ENCODE measurements at regions of chr14 and their contacts with region 1.

Region 1: DNA sequence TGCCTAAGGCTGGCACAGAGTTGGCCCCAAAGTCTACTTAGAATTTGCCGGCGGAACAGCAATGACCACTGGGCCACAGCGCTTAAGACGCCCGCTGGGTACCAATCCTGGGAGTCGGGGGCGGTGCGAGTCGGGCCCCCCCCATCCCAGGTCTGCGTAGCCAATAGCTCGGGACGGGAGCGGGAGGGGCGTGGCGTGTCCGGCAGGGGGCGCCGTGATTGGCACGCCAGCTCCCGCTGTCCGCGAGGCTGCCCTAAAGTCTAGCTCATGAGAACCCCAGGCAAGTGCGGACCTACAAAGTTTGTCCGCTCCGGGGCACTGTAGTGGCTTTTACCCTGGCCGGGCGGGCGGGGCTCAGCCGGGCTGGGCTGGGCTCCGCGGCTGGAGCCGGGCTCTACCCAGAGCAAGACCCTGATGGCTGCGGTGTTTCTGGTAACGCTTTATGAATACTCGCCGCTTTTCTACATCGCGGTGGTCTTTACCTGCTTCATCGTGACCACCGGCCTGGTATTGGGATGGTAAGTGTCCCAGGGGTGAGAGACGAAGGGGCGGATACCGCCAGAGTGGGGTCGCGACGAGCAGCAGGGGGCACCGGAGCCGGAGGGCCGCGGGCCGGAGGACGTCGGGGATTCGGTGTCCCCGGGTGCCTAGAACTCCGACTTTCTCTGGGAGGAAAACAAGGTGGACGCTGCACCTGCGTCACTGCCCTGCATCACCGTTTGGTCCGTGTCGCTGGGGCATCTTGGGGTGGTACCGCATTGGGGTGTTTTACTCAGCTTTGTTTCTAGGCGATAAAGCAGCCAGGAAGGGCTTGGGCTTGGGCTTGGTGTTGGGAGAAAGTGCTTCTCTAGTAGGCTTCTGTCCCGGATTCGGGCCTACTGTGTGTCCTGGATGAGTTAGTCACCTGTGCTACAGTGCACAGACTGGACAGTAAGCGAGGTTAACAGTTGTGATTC is at the start of gene CGRRF1:
- DNase-seq: peak; percentile 97
- H3K4me3 ChIP-seq: peak within 1 kb of the TSS; percentile 85
- H3K27ac ChIP-seq: no peak within 1 kb of the TSS
- H3K4me1 ChIP-seq: peaks cover 18% of the 10 kb centered on the region
- CTCF ChIP-seq: peak; percentile 66
- total RNA-seq, gene CGRRF1: 8.4 and 10.0 TPM in 2 replicates

Region 2: GRCh38 chr14:54488646-54489317 is 21.0 kb before region 1 on chr14 and contains the start of gene GMFB:
- CTCF ChIA-PET with region 1: interaction called, 3 read pairs
- POLR2A ChIA-PET with region 1: interaction called, 75 read pairs
- intact Hi-C with region 1: no loop called
- DNase-seq: peak; percentile 93
- H3K4me3 ChIP-seq: peak within 1 kb of the TSS; percentile 87
- H3K27ac ChIP-seq: peak within 1 kb of the TSS; percentile 65
- H3K4me1 ChIP-seq: peaks cover 52% of the 10 kb centered on the region
- CTCF ChIP-seq: peak; percentile 62
- total RNA-seq, gene GMFB: 45.7 and 61.3 TPM in 2 replicates

Region 3: DNA sequence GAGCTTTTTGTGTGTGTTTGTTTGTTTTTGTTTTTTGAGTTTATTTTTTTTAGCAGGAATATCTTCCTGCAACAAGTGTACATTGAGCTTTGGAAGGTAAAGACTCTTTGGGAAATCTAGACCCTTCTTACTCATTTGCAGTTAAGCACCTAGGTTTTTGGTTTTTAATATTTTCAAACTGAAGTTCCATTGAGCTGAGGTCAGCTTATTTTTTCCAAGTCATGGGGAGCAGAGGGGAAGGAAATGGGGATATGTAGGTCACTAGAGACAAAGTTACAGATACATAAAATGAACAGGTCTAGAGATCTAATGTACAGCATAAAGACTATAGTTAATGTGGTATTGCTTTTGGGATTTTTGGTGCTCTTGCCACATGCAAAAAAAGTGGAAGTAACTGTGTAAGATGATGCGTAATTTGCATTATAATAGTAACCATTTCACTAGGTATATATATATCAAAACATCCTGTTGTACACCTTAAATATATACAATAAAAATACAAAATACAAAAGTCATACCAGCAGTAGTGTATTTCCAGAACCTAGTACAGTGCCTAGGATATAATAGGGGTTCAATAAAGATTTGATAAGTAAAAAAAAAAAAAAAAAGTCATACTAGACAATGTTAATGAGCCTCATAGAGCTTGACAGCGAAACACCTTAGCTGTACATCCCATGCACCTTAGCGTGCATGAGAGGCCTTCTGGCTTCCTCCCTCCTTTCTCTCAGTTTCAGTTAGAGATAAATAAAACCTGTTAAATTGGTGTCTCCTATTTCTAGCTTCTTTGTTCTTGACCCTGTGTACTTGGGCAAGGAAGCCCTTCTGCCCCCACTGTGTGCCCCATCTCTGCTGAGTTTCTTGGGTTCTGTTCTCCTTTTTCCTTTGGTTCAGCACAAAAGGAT is 22.5 kb after region 1 on chr14:
- CTCF ChIA-PET with region 1: no interaction called
- POLR2A ChIA-PET with region 1: interaction called, 18 read pairs
- intact Hi-C with region 1: no loop called
- DNase-seq: peak; percentile 63
- H3K4me3 ChIP-seq: peak overlapping the region; percentile 37
- H3K27ac ChIP-seq: peak overlapping the region; percentile 64
- H3K4me1 ChIP-seq: peaks cover 19% of the 10 kb centered on the region
- CTCF ChIP-seq: no peak

Region 4: DNA sequence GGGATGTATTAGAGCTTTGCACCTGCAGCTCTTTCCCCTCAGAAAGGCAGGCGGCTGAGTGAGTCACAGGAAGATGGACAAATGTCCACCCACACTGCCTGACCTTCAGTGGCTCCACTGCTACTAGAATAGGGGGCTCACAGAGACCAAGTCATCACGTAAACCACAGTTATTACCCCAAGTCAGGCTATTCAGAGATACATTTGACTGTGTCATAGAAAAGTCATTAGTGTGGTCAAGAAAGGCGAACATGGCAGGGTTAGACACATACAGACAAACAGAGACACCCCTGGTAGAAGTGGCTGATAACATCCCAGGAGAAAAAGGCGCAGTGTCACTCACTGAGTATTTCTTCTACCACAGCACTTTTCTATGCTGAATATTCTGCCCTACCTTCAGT is 356.8 kb after region 1 on chr14:
- CTCF ChIA-PET with region 1: no interaction called
- POLR2A ChIA-PET with region 1: no interaction called
- intact Hi-C with region 1: no loop called
- DNase-seq: no peak
- H3K4me3 ChIP-seq: no peak overlapping the region
- H3K27ac ChIP-seq: no peak overlapping the region
- H3K4me1 ChIP-seq: no peaks in the 10 kb centered on the region
- CTCF ChIP-seq: no peak

Measured in OCI-LY7 (cell line).